ENCODE measurements at regions of chr20 and their contacts with region 1.

Region 1: GRCh38 chr20:13105864-13106457 is 97.2 kb downstream of the SPTLC3 start:
- DNase-seq: no peak
- H3K4me3 Mint-ChIP-seq: no peak overlapping the region
- H3K27ac Mint-ChIP-seq: no peak overlapping the region
- H3K4me1 Mint-ChIP-seq: peaks cover 7% of the 10 kb centered on the region
- H3K27me3 Mint-ChIP-seq: no peaks in the 10 kb centered on the region
- CTCF ChIP-seq: peak; percentile 26

Region 2: GRCh38 chr20:12970372-12970821 is 135.6 kb before region 1 on chr20:
- CTCF ChIA-PET with region 1: no interaction called
- intact Hi-C with region 1: loop called (anchors 1 kb)
- DNase-seq: peak; percentile 13
- H3K4me3 Mint-ChIP-seq: no peak overlapping the region
- H3K27ac Mint-ChIP-seq: no peak overlapping the region
- H3K4me1 Mint-ChIP-seq: no peaks in the 10 kb centered on the region
- H3K27me3 Mint-ChIP-seq: no peaks in the 10 kb centered on the region
- CTCF ChIP-seq: no peak

Region 3: DNA sequence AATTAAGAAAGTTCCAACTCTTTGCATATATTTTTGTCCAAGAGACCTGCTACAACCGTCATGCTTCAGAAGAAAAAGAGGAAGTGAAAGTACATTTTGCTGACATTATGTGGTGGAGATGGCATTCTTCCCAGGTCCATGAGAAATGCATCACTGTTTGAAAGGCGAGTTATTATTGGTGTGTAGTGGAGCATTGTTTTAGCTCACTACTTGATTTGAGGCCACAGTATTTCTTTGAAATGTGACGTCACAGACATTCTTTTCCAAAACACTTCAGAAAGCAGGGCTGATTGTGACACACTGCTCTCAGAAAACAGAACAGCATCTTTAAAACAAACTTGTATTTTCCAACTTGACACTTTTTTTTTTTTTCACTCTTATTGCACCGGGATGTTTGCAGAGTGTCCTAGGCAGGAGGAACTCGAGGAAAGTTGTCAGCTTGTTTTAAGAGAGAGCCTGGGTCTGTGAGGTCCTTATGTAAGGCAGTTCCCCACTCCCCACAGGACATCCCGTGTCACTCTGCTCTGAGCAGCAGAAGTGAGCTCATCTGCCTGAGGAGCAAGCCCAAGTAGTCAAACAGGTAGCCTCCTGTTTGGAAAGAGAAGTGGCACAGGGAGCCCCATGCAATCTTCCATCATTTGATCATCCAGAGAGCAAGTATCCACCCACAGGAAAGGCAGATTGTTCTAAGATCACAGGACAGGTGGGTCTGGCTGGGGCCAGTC is 96.1 kb before region 1 on chr20:
- CTCF ChIA-PET with region 1: no interaction called
- intact Hi-C with region 1: loop called (anchors 10 kb)
- DNase-seq: peak; percentile 8
- H3K4me3 Mint-ChIP-seq: peak overlapping the region; percentile 62
- H3K27ac Mint-ChIP-seq: peak overlapping the region; percentile 27
- H3K4me1 Mint-ChIP-seq: peaks cover 37% of the 10 kb centered on the region
- H3K27me3 Mint-ChIP-seq: no peaks in the 10 kb centered on the region
- CTCF ChIP-seq: no peak